ENCODE measurements at regions of chr19 and their contacts with region 1.

Region 1: GRCh38 chr19:39546599-39546998 is 6.6 kb upstream of the EID2 start:
- DNase-seq: peak in 1 of 4 experiments; percentile 34
- ATAC-seq: peak; percentile 51; the same call in 2 of the 3 replicates
- H3K4me3 ChIP-seq: no peak overlapping the region
- H3K27ac ChIP-seq: no peak overlapping the region
- H3K4me1 ChIP-seq: peaks cover 0 to 3% of the 10 kb centered on the region in 2 experiments; a peak in 2 of 5 replicates
- H3K27me3 ChIP-seq: peaks cover 11 to 16% of the 10 kb centered on the region in 2 experiments; a peak in 3 of 5 replicates
- CTCF ChIP-seq: no peak
- EP300 ChIP-seq: no peak
- POLR2A ChIP-seq: no peak
- RAD21 ChIP-seq: no peak

Region 2: GRCh38 chr19:39631178-39631577 is 84.6 kb after region 1 on chr19:
- CTCF ChIA-PET with region 1: interaction called, 9 read pairs
- POLR2A ChIA-PET with region 1: no interaction called
- in situ Hi-C with region 1: no loop called
- intact Hi-C with region 1: loop called (anchors 2 kb)
- DNase-seq: no peak
- ATAC-seq: no peak
- H3K4me3 ChIP-seq: no peak overlapping the region
- H3K27ac ChIP-seq: no peak overlapping the region
- H3K4me1 ChIP-seq: no peaks in the 10 kb centered on the region
- H3K27me3 ChIP-seq: peaks cover 0 to 4% of the 10 kb centered on the region in 2 experiments; a peak in 1 of 5 replicates
- CTCF ChIP-seq: no peak
- EP300 ChIP-seq: no peak
- POLR2A ChIP-seq: no peak
- RAD21 ChIP-seq: no peak

Region 3: DNA sequence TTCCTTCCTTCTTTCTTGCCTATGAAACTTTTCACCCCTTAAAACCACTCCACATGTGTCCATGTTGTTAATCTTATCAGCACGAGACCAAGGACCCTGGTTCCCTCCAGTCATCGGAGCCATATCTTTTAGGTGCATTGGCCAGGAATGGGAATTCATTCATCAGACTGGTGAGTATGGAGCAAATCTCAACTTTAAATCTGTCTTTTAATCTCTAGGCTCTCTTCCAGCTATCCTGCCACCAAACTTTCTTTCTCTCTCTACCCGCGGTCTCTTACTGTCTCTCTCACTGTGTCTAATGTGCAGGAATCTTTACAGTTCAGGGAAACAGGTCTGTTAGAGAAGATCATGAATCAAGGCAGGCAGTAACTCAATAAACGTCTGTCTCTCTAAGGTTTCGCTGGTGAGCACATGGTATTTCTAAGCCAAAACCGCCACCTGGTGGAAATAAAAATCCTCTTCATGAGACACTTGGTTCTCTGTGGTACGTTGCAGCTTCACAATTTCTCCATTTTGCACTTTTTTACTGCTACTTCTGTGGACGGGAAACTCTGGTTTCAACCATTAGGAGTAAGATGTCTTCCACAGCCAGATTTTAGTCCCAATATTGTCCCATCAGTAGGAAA is 125.3 kb after region 1 on chr19:
- CTCF ChIA-PET with region 1: interaction called, 19 read pairs
- POLR2A ChIA-PET with region 1: no interaction called
- in situ Hi-C with region 1: no loop called
- intact Hi-C with region 1: loop called (anchors 1 kb)
- DNase-seq: peak in 2 of 4 experiments; percentile 37 to 58
- ATAC-seq: peak; percentile 83
- H3K4me3 ChIP-seq: no peak overlapping the region
- H3K27ac ChIP-seq: no peak overlapping the region
- H3K4me1 ChIP-seq: no peaks in the 10 kb centered on the region
- H3K27me3 ChIP-seq: no peaks in the 10 kb centered on the region
- CTCF ChIP-seq: peak; percentile 57 to 71 (median 63); a peak in 4 of 6 replicates
- EP300 ChIP-seq: no peak
- POLR2A ChIP-seq: no peak
- RAD21 ChIP-seq: peak; percentile 85 to 87

Measured in K562 (cell line).